Activated T-helper 1 cell treated with anti-CD3 and anti-CD28 coated beads, Interleukin-12 subunit alpha, Interleukin-12 subunit beta, Interleukin-2, Interleukin-4 antibody, amounts not matched to agents 30 ng/mL and 10 ng/mL and 1 ng/mL, durations not matched to agents 14 hours and 24 hours and 36 hours (primary cell): ENCODE measurements at regions of chr9 and their contacts with region 1.

Region 1: GRCh38 chr9:128361986-128362646 is 9.1 kb upstream of the URM1 start:
- DNase-seq: peak; percentile 52
- H3K4me3 Mint-ChIP-seq: peak overlapping the region; percentile 79
- H3K27ac Mint-ChIP-seq: peak overlapping the region; percentile 23
- H3K4me1 Mint-ChIP-seq: peaks cover 18% of the 10 kb centered on the region
- H3K27me3 Mint-ChIP-seq: no peaks in the 10 kb centered on the region

Region 2: DNA sequence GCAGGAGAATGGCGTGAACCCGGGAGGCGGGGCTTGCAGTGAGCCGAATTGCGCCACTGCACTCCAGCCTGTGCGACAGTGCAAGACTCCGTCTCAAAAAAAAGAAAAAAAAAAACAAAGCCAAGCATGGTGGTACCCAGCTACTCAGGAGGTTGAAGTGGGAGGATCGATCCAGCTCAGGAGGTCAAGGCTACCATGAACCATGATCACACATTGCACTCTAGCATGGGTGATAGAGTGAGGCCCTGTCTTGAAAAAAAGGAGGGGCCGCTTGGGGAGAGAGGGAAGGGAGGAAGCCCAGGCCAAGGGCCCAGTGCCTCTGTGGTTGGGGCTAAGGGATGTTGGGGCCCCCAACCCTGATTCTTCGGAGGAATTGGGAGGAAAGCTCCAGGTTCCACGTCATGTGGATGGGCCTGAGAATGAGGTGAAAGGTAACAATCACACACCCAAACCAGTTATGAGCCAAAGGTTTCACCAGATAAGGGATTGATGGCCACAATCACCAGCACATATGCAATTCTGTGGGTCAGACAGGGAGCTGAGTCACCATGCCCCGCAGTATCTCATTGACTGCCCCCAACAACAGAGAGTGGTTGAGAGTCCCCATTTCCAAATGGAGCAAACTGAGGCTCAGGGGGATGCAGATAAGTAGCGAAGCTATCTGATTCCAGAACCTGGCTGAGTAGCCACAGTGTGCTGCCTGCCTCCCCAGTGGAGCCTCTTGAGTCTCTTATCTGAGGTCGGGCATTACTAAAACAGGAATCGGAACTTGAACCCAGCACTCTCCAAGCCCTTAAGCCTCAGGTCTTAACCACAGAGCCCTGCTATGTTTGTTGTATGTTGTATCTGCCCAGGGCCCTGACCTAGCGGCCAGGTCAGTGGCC is 65.5 kb before region 1 on chr9:
- intact Hi-C with region 1: loop called (anchors 1 kb)
- DNase-seq: no peak
- H3K4me3 Mint-ChIP-seq: no peak overlapping the region
- H3K27ac Mint-ChIP-seq: no peak overlapping the region
- H3K4me1 Mint-ChIP-seq: peaks cover 5% of the 10 kb centered on the region
- H3K27me3 Mint-ChIP-seq: no peaks in the 10 kb centered on the region

Region 3: GRCh38 chr9:128412120-128412790 is 50.1 kb after region 1 on chr9:
- intact Hi-C with region 1: loop called (anchors 1 kb)
- DNase-seq: peak; percentile 22
- H3K4me3 Mint-ChIP-seq: no peak overlapping the region
- H3K27ac Mint-ChIP-seq: no peak overlapping the region
- H3K4me1 Mint-ChIP-seq: peaks cover 5% of the 10 kb centered on the region
- H3K27me3 Mint-ChIP-seq: peaks cover 44% of the 10 kb centered on the region

Region 4: GRCh38 chr9:128420060-128420650 is 58.0 kb after region 1 on chr9:
- intact Hi-C with region 1: loop called (anchors 2 kb)
- DNase-seq: peak; percentile 65
- H3K4me3 Mint-ChIP-seq: peak overlapping the region; percentile 78
- H3K27ac Mint-ChIP-seq: no peak overlapping the region
- H3K4me1 Mint-ChIP-seq: peaks cover 16% of the 10 kb centered on the region
- H3K27me3 Mint-ChIP-seq: peaks cover 45% of the 10 kb centered on the region

Region 5: GRCh38 chr9:128504485-128505413 is 142.6 kb after region 1 on chr9 and contains the start of gene GLE1:
- intact Hi-C with region 1: loop called (anchors 2 kb)
- DNase-seq: peak; percentile 97
- H3K4me3 Mint-ChIP-seq: peak within 1 kb of the TSS; percentile 99
- H3K27ac Mint-ChIP-seq: peak within 1 kb of the TSS; percentile 99
- H3K4me1 Mint-ChIP-seq: peaks cover 23% of the 10 kb centered on the region
- H3K27me3 Mint-ChIP-seq: no peaks in the 10 kb centered on the region
- total RNA-seq, gene GLE1: 51.4 and 52.0 TPM in 2 replicates

Region 6: GRCh38 chr9:128723866-128724743 is 362.0 kb after region 1 on chr9 and contains the start of gene ZDHHC12:
- intact Hi-C with region 1: no loop called
- DNase-seq: peak; percentile 99
- H3K4me3 Mint-ChIP-seq: peak within 1 kb of the TSS; percentile 92
- H3K27ac Mint-ChIP-seq: peak within 1 kb of the TSS; percentile 93
- H3K4me1 Mint-ChIP-seq: peaks cover 42% of the 10 kb centered on the region
- H3K27me3 Mint-ChIP-seq: no peaks in the 10 kb centered on the region
- total RNA-seq, gene ZDHHC12: 51.7 and 54.4 TPM in 2 replicates